GM10248 (cell line): ENCODE measurements at regions of chr6 and their contacts with region 1.

Region 1: GRCh38 chr6:106997390-106998158 is 23.0 kb upstream of the CD24 start:
- DNase-seq: peak; percentile 78
- CTCF ChIP-seq: peak; percentile 81

Region 2: GRCh38 chr6:106444777-106445507 is 552.6 kb before region 1 on chr6:
- CTCF ChIA-PET with region 1: interaction called, 20 read pairs
- POLR2A ChIA-PET with region 1: no interaction called
- DNase-seq: peak; percentile 64
- CTCF ChIP-seq: peak; percentile 70

Region 3: GRCh38 chr6:106823732-106824351 is 173.7 kb before region 1 on chr6:
- CTCF ChIA-PET with region 1: no interaction called
- POLR2A ChIA-PET with region 1: no interaction called
- DNase-seq: no peak
- CTCF ChIP-seq: no peak

Region 4: GRCh38 chr6:107009499-107009898 is 11.9 kb after region 1 on chr6:
- CTCF ChIA-PET with region 1: interaction called, 20 read pairs
- POLR2A ChIA-PET with region 1: no interaction called
- DNase-seq: no peak
- CTCF ChIP-seq: no peak

Region 5: DNA sequence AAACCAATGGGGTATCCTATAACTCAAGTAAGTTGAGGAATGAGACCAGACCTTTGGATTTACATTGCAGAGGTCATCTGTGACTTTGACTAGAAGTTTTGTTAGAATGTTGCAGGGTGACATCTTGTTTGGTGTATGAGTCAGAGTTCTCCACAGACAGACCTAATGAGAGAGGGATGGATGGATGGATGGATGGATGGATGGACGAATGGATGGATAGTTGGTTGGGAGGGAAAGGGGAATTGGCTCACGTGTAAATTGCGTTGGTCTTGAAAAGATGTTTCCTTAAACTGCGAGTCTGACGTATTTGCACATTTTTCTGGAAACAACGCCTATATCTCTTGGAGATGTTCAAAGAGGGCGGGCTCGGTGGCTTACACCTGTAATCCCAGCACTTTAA is 29.4 kb after region 1 on chr6:
- CTCF ChIA-PET with region 1: interaction called, 12 read pairs
- POLR2A ChIA-PET with region 1: no interaction called
- DNase-seq: no peak
- CTCF ChIP-seq: peak; percentile 3

Region 6: DNA sequence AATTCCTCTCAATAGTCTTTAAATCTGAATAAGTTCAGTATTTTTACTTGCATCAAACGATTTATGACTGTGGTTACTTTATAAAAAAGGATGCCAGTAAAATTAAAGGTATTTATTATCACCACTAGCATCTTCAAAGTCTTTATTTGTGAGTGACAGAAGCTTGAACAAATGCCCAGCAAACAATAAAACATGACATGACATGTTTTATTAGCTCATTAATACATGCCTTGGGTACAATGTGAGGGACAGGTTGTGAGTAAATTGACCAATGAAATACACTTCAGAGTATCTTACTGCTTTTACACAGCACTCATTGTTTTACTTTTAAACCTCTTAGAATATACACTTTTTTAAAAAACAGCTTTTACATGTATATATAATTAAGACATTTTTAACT is 231.2 kb after region 1 on chr6:
- CTCF ChIA-PET with region 1: no interaction called
- POLR2A ChIA-PET with region 1: no interaction called
- DNase-seq: no peak
- CTCF ChIP-seq: no peak